ENCODE measurements at regions of chr2 and their contacts with region 1.

Region 1: GRCh38 chr2:85327822-85328617 is at the start of gene TGOLN2:
- DNase-seq: peak; percentile 91
- ATAC-seq: peak; percentile 90
- H3K4me3 Mint-ChIP-seq: peak within 1 kb of the TSS; percentile 99
- H3K27ac Mint-ChIP-seq: peak within 1 kb of the TSS; percentile 100
- H3K4me1 Mint-ChIP-seq: peaks cover 61% of the 10 kb centered on the region
- H3K27me3 Mint-ChIP-seq: no peaks in the 10 kb centered on the region
- CTCF ChIP-seq: no peak
- total RNA-seq, gene TGOLN2: 103 and 119 TPM in 2 replicates

Region 2: GRCh38 chr2:84953535-84953934 is 374.5 kb before region 1 on chr2:
- CTCF ChIA-PET with region 1: no interaction called
- POLR2A ChIA-PET with region 1: no interaction called
- intact Hi-C with region 1: no loop called
- DNase-seq: no peak
- ATAC-seq: no peak
- H3K4me3 Mint-ChIP-seq: no peak overlapping the region
- H3K27ac Mint-ChIP-seq: no peak overlapping the region
- H3K4me1 Mint-ChIP-seq: peaks cover 11% of the 10 kb centered on the region
- H3K27me3 Mint-ChIP-seq: no peaks in the 10 kb centered on the region
- CTCF ChIP-seq: no peak

Region 3: GRCh38 chr2:84970868-84971509 is 357.0 kb before region 1 on chr2 and contains the start of gene KCMF1:
- CTCF ChIA-PET with region 1: no interaction called
- POLR2A ChIA-PET with region 1: interaction called, 14 read pairs
- intact Hi-C with region 1: no loop called
- DNase-seq: peak; percentile 77
- ATAC-seq: peak; percentile 56
- H3K4me3 Mint-ChIP-seq: peak within 1 kb of the TSS; percentile 97
- H3K27ac Mint-ChIP-seq: peak within 1 kb of the TSS; percentile 98
- H3K4me1 Mint-ChIP-seq: peaks cover 57% of the 10 kb centered on the region
- H3K27me3 Mint-ChIP-seq: no peaks in the 10 kb centered on the region
- CTCF ChIP-seq: no peak
- total RNA-seq, gene KCMF1: 77.1 and 96.6 TPM in 2 replicates

Region 4: GRCh38 chr2:85390941-85391669 is 63.1 kb after region 1 on chr2:
- CTCF ChIA-PET with region 1: no interaction called
- POLR2A ChIA-PET with region 1: interaction called, 30 read pairs
- intact Hi-C with region 1: loop called (anchors 1 kb)
- DNase-seq: peak; percentile 69
- ATAC-seq: peak; percentile 22
- H3K4me3 Mint-ChIP-seq: no peak overlapping the region
- H3K27ac Mint-ChIP-seq: peak overlapping the region; percentile 81
- H3K4me1 Mint-ChIP-seq: peaks cover 30% of the 10 kb centered on the region
- H3K27me3 Mint-ChIP-seq: no peaks in the 10 kb centered on the region
- CTCF ChIP-seq: no peak

Region 5: DNA sequence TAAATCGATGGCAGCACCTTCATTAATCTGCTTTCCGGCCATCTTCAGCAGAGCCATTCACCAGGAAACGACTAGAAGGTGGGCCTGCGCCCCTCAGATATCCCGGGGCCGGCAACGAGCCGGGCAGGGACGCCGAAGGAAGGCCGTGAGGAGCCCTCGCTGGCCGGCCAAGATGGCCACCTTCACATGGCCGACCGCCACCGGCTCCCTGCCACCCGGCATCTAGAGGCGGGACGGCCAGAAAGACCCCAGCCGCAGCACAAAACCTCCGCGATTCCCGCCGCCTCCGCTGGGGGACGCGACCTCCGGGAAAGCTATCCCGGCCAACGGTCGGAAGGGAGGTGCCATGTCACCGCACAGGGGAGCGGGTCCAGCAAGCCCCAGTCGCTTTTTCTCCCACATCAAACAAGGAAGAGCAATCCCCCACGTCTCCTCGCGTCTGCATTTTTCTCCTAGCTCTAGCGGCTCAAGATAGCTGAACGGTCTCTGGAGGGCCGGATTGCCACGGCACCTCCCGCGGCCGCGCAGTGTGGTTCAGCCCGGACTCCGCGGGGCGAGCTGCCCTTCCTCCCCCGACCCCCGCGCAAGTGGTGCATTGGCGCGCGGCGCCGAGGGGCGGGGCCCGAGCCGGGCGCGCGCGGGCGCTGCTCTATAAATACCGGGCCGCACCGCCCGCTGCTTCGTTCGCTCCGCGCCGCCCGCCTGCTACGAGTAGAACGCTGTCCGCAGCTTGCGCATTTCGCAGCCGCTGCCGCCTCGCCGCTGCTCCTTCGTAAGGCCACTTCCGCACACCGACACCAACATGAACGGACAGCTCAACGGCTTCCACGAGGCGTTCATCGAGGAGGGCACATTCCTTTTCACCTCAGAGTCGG is 210.7 kb after region 1 on chr2 and contains the start of gene MAT2A:
- CTCF ChIA-PET with region 1: interaction called, 3 read pairs
- POLR2A ChIA-PET with region 1: interaction called, 71 read pairs
- intact Hi-C with region 1: loop called (anchors 1 kb)
- DNase-seq: peak; percentile 94
- ATAC-seq: peak; percentile 80
- H3K4me3 Mint-ChIP-seq: peak within 1 kb of the TSS; percentile 96
- H3K27ac Mint-ChIP-seq: peak within 1 kb of the TSS; percentile 99
- H3K4me1 Mint-ChIP-seq: peaks cover 37% of the 10 kb centered on the region
- H3K27me3 Mint-ChIP-seq: no peaks in the 10 kb centered on the region
- CTCF ChIP-seq: no peak
- total RNA-seq, gene MAT2A: 228 and 265 TPM in 2 replicates

Region 6: GRCh38 chr2:85619617-85620016 is 291.6 kb after region 1 on chr2:
- CTCF ChIA-PET with region 1: no interaction called
- POLR2A ChIA-PET with region 1: interaction called, 3 read pairs
- intact Hi-C with region 1: loop called (anchors 5 kb)
- DNase-seq: no peak
- ATAC-seq: no peak
- H3K4me3 Mint-ChIP-seq: no peak overlapping the region
- H3K27ac Mint-ChIP-seq: no peak overlapping the region
- H3K4me1 Mint-ChIP-seq: peaks cover 29% of the 10 kb centered on the region
- H3K27me3 Mint-ChIP-seq: no peaks in the 10 kb centered on the region
- CTCF ChIP-seq: no peak

Region 7: DNA sequence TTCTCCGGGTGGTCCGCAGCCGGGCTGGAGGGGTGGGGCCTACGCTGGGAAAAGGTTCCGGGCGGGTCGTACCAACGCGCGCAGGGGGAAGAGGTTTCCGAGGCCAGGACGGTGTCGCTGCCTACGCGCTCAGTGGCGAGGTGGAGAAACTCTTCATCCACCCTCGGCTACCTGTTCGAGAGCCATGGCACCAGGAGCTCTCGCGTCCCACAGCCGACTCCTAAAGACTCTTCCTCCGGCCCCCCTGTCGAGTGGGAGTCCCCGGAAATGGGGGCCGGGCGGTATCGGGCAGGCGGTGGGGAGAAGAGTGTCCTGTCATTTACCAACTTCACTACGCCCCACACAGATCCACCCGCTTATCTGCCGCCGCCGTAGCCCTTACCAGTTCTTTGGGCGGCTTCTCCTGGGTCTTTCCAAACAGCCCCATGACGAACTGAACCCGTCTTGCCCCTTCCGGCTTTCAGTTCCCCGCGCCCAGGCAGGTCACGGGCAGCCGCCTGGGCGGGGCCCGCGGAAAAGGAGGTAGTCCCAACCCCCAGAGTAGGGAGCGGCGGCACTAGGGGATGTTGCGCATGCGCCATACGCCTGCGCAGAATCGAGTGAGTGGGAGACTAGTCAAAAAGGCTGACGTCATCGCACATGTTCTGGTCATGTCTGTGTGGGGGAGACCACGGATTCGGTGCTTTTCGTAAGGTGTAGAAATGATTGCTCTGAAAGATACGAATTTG is 1235.1 kb after region 1 on chr2 and contains the start of gene CHMP3:
- CTCF ChIA-PET with region 1: no interaction called
- POLR2A ChIA-PET with region 1: no interaction called
- intact Hi-C with region 1: loop called (anchors 10 kb)
- DNase-seq: peak; percentile 94
- ATAC-seq: peak; percentile 89
- H3K4me3 Mint-ChIP-seq: peak within 1 kb of the TSS; percentile 97
- H3K27ac Mint-ChIP-seq: peak within 1 kb of the TSS; percentile 98
- H3K4me1 Mint-ChIP-seq: peaks cover 38% of the 10 kb centered on the region
- H3K27me3 Mint-ChIP-seq: peaks cover under 1% of the 10 kb centered on the region
- CTCF ChIP-seq: no peak
- total RNA-seq, gene CHMP3: 61.4 and 66.9 TPM in 2 replicates